Activated CD8-positive, alpha-beta T cell treated with anti-CD3 and anti-CD28 coated beads, Interleukin-2, amount 10 ng/mL, durations not matched to agents 7 days and 5 days (primary cell): ENCODE measurements at regions of chr14 and their contacts with region 1.

Region 1: GRCh38 chr14:105065280-105066228 is at the start of gene GPR132:
- DNase-seq: peak; percentile 97
- ATAC-seq: peak; percentile 86
- H3K4me3 Mint-ChIP-seq: peak within 1 kb of the TSS; percentile 88
- H3K27ac Mint-ChIP-seq: peak within 1 kb of the TSS; percentile 94
- H3K4me1 Mint-ChIP-seq: peaks cover 74% of the 10 kb centered on the region
- H3K27me3 Mint-ChIP-seq: no peaks in the 10 kb centered on the region
- total RNA-seq, gene GPR132: 35.7 to 40.4 TPM

Region 2: DNA sequence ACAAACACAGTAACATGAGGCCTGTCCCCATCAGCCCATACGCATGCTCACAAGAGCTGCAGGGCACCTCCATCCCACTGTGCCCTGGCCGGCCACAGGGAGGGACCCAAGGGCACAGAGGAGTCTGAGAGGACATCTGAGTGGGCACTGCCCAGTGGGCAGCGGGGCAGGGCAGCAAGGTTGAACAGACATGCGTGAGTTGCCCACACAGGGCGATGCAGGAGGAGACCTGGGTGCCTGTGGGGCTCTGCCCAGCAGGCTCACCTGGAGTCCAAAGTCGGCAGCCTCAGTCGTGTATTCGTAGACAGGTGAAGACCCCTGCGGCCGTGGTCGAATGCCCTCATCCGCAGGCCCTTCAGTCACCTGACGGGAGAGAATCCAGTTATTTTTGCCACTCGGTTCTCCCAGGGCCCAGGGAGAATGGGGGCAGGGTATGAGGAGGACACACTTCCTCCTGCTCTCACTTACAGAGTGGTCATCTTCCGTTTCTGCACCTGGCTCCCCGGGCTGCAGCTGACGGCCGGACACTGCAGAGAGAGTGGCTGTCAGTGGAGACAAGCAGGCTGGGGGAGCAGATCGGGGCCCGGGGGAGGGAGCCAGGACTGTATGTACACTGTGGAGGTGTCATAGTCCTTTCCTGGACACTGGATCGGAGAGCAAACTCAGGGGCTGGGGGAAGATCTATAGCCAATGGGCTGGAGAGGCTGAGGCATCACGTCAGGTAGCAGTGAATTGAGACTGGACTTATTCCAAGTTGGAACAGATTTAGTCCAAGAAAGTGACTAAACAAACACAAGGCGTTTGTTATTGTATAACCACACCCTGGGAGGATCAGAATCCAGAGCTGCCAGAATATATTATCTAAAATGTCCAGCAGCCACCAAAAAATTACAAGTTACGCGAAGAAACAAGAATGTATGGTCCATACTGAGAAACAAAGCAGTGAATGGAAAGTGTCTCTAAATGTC is 108.1 kb before region 1 on chr14:
- CTCF ChIA-PET with region 1: no interaction called
- POLR2A ChIA-PET with region 1: no interaction called
- DNase-seq: no peak
- ATAC-seq: no peak
- H3K4me3 Mint-ChIP-seq: no peak overlapping the region
- H3K27ac Mint-ChIP-seq: no peak overlapping the region
- H3K4me1 Mint-ChIP-seq: no peaks in the 10 kb centered on the region
- H3K27me3 Mint-ChIP-seq: peaks cover 6% of the 10 kb centered on the region

Region 3: DNA sequence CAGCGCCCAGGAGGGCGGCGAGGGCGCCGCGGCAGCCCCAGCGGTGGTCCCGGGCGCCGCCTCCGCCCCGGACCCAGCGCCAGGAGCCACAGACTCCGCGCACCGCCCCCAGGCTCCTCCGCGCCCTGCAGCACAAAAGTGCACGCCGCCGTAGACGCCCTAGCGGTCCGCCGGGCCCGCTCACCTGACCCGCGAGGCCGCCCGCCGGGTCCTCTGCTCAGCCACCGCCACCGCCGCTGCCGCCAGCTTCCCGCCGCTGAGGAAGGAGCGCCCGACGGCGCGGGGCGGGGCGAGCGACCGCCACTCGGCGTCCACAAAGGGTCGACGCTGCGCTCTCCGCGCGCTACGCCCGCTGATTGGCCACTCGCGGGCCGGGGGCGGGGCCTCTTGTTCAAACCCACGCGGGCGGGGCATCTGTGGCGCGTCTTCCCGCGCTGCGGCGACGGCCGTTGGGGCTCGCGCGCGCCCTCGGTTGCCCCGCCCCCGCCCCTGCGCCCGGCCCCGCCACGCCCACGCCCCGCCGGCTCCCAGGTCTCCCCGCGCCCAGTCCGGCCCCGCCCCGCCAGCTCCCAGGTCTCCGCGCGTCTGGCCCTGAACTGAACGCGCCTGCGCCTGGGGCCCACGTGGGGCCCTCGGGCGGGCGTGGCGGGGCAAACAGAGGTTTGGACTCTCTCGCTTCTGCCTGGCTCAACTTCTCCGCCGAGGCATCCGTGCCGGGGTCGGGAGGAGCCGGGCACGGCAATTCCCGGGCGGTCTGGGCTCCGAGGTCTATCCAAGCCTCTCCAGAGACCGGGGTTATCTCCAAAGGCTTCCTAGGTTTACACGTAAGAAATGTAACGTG is 44.5 kb before region 1 on chr14 and contains the start of gene CDCA4:
- CTCF ChIA-PET with region 1: interaction called, 3 read pairs
- POLR2A ChIA-PET with region 1: interaction called, 15 read pairs
- DNase-seq: peak; percentile 97
- ATAC-seq: peak; percentile 90
- H3K4me3 Mint-ChIP-seq: peak within 1 kb of the TSS; percentile 93
- H3K27ac Mint-ChIP-seq: peak within 1 kb of the TSS; percentile 91
- H3K4me1 Mint-ChIP-seq: peaks cover 65% of the 10 kb centered on the region
- H3K27me3 Mint-ChIP-seq: no peaks in the 10 kb centered on the region
- total RNA-seq, gene CDCA4: 59.9 to 62.3 TPM

Region 4: DNA sequence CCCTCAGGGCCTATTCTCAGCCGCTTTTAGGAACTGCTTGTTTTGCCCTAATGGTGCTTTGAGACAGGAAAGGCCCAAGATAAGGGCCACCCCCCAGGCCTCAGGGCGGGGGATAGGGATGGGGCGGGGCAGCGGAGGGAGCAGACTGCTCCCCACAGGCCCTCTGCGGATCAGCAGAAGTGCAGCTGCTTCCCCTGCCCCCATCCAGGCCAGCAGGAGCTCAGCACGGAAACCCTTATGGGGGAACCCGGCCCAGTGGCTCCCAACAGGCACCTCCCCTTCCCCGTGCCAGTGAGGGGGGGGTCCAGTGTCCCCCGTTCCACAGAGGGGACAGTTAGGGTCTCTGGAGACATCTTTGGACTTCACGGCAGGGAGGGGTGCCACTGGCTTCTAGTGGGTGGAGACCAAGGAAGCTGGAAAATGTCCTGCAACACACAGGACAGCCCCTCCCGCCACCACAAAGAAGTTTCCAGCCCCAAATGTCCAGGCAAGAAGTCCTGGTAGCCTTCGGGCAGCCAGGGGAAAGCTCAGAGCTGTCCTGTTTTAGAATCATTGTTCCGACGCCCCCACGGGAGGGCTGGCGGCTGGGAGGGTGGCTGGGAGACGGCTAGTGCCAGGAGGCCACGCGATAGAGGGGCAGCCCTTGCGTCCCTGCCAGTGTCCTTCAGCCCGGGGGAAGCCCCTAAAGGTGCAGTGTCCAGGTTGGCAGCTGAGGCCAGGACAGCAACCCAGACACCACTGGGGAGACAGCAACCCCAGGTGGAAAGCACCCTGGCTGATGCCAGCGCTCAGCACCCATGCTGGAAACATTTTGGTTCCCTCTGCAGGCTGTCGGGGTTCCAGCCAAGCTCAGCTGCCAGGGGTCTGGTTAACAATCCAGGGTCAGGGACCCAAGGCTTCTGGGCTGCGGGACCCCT is 10.1 kb after region 1 on chr14:
- CTCF ChIA-PET with region 1: interaction called, 8 read pairs
- POLR2A ChIA-PET with region 1: interaction called, 66 read pairs
- DNase-seq: peak; percentile 80
- ATAC-seq: peak; percentile 72
- H3K4me3 Mint-ChIP-seq: peak overlapping the region; percentile 31
- H3K27ac Mint-ChIP-seq: peak overlapping the region; percentile 75
- H3K4me1 Mint-ChIP-seq: peaks cover 51% of the 10 kb centered on the region
- H3K27me3 Mint-ChIP-seq: peaks cover 15% of the 10 kb centered on the region

Region 5: DNA sequence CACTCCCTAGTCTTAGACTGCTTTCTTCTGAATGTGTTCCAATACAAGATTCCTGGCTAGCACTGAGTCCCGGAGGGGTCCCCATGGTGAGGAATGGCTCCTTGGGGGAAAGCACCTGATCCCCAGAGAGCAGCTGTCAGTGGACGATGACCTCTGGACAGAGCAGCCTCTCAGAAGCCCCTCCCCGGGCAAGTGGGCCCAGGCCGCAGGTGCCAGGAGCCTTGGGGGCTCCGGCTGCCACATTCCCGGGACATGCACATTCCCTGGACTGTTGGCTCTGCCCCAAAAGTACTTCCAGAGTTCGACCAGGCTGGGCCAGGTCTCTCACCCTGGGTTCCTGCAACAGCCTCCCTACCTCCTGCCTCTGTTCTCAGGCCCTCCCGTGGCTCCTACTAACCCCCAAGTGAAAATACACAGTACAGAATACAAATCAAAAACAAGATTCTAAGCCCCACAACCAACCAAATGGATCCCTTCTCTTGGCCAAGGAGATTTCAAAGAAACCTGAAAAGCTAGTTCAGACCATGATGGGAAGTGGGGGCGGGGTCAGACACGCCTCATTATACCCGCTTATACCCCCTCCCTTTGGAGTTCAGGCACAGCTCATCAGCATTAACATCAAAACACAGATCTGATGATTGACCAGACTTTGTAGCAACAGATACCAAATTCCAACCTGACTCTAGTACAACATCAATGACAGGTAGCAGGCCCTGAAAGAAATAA is 159.5 kb after region 1 on chr14:
- CTCF ChIA-PET with region 1: no interaction called
- POLR2A ChIA-PET with region 1: no interaction called
- DNase-seq: no peak
- ATAC-seq: no peak
- H3K4me3 Mint-ChIP-seq: no peak overlapping the region
- H3K27ac Mint-ChIP-seq: peak overlapping the region; percentile 10
- H3K4me1 Mint-ChIP-seq: no peaks in the 10 kb centered on the region
- H3K27me3 Mint-ChIP-seq: no peaks in the 10 kb centered on the region